GM23248 (cell line): ENCODE measurements at regions of chr6 and their contacts with region 1.

Region 1: GRCh38 chr6:127737009-127737486 is 160.1 kb downstream of the C6orf58 start:
- DNase-seq: peak; percentile 79
- H3K4me3 ChIP-seq: no peak overlapping the region
- H3K27ac ChIP-seq: no peak overlapping the region
- H3K4me1 ChIP-seq: peaks cover 4% of the 10 kb centered on the region; the same call in 1 of the 2 replicates
- H3K27me3 ChIP-seq: no peaks in the 10 kb centered on the region

Region 2: DNA sequence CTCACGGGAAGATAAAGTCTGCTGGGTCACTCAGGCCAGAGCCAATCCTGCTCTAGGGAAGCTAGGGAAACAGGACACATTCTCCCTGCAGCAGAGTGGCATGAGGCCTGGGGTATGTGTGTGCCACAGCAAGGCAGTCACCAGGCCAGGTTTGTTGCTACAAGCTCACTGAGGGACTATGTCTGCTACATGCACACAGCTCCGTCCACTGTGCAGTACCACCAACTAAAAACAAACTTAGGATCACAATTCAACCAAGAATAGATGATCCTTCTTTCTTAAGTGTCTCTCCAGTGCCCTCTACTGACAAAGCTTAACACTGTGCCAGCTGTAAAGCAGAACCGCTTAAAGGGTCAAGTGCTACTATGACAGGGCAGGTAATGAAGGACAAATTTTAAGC is 590.8 kb after region 1 on chr6:
- in situ Hi-C with region 1: loop called (anchors 5 kb)
- DNase-seq: peak; percentile 48
- H3K4me3 ChIP-seq: no peak overlapping the region
- H3K27ac ChIP-seq: no peak overlapping the region
- H3K4me1 ChIP-seq: no peaks in the 10 kb centered on the region
- H3K27me3 ChIP-seq: no peaks in the 10 kb centered on the region